CD8-positive, alpha-beta T cell (primary cell): ENCODE measurements at regions of chr3 and their contacts with region 1.

Region 1: DNA sequence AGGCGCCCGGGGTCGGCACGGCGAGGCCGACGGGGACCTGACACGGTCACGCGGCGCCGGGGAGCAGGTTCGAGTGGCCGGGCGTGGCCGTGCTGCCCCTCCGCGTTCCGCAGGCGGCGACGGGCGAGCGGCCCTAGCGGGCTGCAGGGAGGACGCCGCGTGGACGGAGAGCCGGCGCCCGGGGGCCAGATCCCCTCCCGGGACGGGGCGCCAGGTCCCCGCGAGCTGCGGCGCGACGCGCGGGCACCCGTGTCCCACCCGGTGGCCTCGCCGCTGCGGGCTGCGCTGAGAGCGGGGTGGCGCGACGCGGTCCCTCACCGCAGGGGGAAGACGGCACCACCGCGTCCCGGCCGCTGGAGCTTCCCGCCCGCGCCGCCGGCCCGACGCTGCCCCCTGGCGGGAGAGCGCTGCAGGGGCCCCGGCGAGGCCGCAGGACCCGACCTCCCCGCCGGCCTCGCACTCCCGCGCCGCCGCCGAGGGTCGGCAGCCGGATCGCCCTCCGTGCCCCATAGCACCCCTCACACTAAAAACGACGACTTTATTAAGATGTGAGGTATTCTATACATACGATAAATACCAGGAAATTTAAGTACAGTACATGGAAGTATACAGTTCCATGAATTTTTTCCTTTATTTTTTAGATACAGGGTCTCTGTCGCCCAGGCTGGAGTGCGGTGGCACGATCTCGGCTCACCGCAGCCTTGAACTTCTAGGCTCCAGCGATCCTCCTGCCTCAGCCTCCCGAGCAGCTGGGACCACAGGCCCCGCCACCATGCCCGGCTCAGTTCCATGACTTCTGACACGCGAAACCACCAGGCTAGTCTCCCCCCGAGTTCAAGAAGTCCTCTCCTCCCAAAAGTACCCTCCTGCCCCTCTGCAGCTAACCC is 1.3 kb upstream of the PIGZ start:
- DNase-seq: peak; percentile 29 to 82 (median 61)
- ATAC-seq: peak; percentile 72
- H3K4me3 ChIP-seq: peak overlapping the region in 1 of 2 experiments; percentile 65
- H3K4me3 Mint-ChIP-seq: peak overlapping the region; percentile 77
- H3K27ac ChIP-seq: no peak overlapping the region
- H3K27ac Mint-ChIP-seq: no peak overlapping the region
- H3K4me1 ChIP-seq: peaks cover 13% of the 10 kb centered on the region
- H3K4me1 Mint-ChIP-seq: peaks cover 4% of the 10 kb centered on the region
- H3K27me3 ChIP-seq: no peaks in the 10 kb centered on the region
- H3K27me3 Mint-ChIP-seq: peaks cover 11% of the 10 kb centered on the region
- CTCF ChIP-seq: peak; percentile 63

Region 2: DNA sequence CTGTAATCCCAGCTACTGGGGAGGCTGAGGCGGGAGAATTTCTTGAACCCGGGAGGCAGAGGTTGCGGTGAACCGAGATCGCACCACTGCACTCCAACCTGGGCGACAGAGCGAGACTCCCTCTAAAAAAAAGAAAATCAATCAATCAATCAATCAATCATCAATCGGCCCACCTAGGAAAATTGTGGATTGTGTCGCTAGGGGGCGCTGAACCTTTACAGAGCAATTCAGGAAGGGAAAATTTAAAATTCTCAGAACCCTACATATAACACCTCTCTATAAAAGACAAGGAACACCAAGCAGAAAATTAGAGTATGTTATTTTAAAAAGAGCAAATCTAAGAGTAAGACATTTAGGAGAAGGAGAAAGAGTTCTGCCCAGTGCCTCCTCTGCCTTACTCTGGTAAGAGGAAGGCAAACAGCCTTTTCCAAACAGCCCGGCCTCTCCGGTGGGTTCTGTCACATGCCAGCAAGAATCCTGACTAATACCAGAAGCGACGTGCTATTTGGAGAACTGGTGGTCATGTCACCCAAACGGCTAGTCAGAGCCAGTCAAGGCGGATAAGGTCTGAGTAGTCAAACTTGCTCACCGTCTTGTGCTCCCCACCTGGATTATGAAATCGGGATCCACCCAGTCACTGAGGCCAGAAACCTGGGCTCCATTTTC is 432.5 kb before region 1 on chr3:
- CTCF ChIA-PET with region 1: no interaction called
- POLR2A ChIA-PET with region 1: no interaction called
- intact Hi-C with region 1: loop called in 1 of 2 experiments (anchors 2 kb)
- DNase-seq: peak in 8 of 9 experiments; percentile 42 to 77 (median 66)
- ATAC-seq: no peak
- H3K4me3 ChIP-seq: no peak overlapping the region
- H3K4me3 Mint-ChIP-seq: no peak overlapping the region
- H3K27ac ChIP-seq: no peak overlapping the region
- H3K27ac Mint-ChIP-seq: no peak overlapping the region
- H3K4me1 ChIP-seq: no peaks in the 10 kb centered on the region
- H3K4me1 Mint-ChIP-seq: no peaks in the 10 kb centered on the region
- H3K27me3 ChIP-seq: peaks cover 0 to 2% of the 10 kb centered on the region in 2 experiments
- H3K27me3 Mint-ChIP-seq: peaks cover 10% of the 10 kb centered on the region
- CTCF ChIP-seq: peak; percentile 67

Region 3: DNA sequence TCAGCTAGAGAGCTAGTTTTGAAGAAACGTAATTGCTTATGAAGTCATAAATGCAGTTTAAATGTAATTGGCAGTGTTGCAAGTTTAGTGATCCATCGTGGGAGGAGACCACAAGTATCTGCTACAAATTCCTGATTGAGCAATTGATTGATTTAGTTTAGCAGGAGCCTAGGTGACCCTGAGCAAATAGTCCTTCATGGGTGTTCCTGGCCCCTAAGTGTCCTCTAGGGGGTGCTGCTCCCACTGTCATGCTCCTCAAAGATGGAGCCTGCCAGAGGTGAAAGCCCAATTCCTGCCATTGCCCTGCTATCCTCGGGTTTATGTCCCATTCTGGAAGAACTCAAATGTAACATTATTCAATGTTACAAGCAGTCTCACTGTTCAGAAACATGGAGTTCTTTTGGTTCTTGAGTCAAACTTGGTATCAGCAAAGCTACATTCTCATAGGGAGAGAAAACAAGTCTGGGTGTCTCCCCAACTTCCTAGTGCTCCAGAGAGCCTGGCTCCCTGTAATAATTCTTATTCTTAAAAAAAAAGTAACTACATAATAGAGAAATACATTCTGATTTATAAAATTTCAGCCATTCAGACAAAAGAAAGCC is 132.0 kb before region 1 on chr3:
- CTCF ChIA-PET with region 1: interaction called, 51 read pairs
- POLR2A ChIA-PET with region 1: interaction called, 3 read pairs
- intact Hi-C with region 1: loop called (anchors 1 kb)
- DNase-seq: peak; percentile 39 to 85 (median 75)
- ATAC-seq: peak; percentile 96
- H3K4me3 ChIP-seq: no peak overlapping the region
- H3K4me3 Mint-ChIP-seq: no peak overlapping the region
- H3K27ac ChIP-seq: no peak overlapping the region
- H3K27ac Mint-ChIP-seq: no peak overlapping the region
- H3K4me1 ChIP-seq: no peaks in the 10 kb centered on the region
- H3K4me1 Mint-ChIP-seq: peaks cover 2% of the 10 kb centered on the region
- H3K27me3 ChIP-seq: no peaks in the 10 kb centered on the region
- H3K27me3 Mint-ChIP-seq: no peaks in the 10 kb centered on the region
- CTCF ChIP-seq: peak; percentile 83